Motor neuron (in vitro differentiated cells): ENCODE measurements at regions of chr10 and their contacts with region 1.

Region 1: DNA sequence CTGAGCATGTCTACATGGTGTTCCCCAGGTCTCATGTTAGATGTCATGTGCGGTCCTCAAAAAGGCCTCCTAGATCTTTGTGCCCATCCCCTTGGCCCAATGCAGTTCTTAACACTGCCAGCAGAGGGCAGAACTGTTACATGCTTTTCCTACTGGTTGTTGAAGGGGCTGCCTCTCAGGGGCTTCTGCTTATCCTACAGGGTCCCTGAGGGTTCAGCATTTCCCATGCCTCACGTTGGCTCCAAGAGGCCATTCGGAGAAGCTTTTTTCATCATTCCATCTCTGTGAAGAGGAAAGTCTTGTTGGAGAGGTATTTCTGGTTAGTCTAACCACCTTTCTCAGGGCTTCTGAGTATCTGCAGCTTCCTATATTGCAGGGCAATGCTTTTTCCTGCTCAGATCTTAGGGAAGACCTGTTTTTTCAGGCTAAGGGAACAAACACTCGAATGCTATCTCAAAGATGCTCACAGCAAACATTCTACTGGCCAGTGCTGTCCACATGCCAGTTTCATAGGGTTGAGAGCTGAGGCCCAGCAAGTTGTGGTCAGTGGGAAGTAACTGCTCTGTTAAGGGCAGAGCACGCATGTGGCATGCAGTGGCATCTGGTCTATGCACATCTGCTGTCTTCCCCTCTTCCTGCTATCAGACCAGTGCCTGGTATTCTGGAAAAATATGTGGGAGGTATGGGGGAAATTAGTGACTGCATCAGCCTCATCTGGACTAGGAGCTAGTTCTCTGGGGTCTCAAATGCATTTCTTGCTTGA is 31.5 kb downstream of the MBL2 start:
- ATAC-seq: peak in 3 of 8 experiments; percentile 57 to 85 (median 58)
- H3K4me3 ChIP-seq: no peak overlapping the region
- H3K27ac ChIP-seq: no peak overlapping the region
- H3K4me1 ChIP-seq: no peaks in the 10 kb centered on the region

Region 2: GRCh38 chr10:52779541-52780390 is 38.7 kb after region 1 on chr10:
- in situ Hi-C with region 1: loop called in 1 of 9 experiments (anchors 5 kb)
- ATAC-seq: peak; percentile 64 to 97 (median 80)
- H3K4me3 ChIP-seq: no peak overlapping the region
- H3K27ac ChIP-seq: no peak overlapping the region
- H3K4me1 ChIP-seq: no peaks in the 10 kb centered on the region